CD4-positive, alpha-beta memory T cell (primary cell): ENCODE measurements at regions of chr11 and their contacts with region 1.

Region 1: GRCh38 chr11:5600374-5600851 is 4.0 kb downstream of the TRIM6 start:
- DNase-seq: peak; percentile 36 to 57 (median 54)
- H3K4me3 ChIP-seq: no peak overlapping the region
- H3K4me3 Mint-ChIP-seq: no peak overlapping the region
- H3K27ac ChIP-seq: no peak overlapping the region
- H3K27ac Mint-ChIP-seq: peak overlapping the region in 1 of 7 donors; percentile 37
- H3K4me1 ChIP-seq: peaks cover 6% of the 10 kb centered on the region
- H3K4me1 Mint-ChIP-seq: peaks cover 3 to 10% (median 5%) of the 10 kb centered on the region in 4 donors
- H3K27me3 ChIP-seq: no peaks in the 10 kb centered on the region
- H3K27me3 Mint-ChIP-seq: peaks cover 6 to 10% of the 10 kb centered on the region in 2 donors

Region 2: GRCh38 chr11:5611627-5612026 is 11.2 kb after region 1 on chr11:
- CTCF ChIA-PET with region 1: interaction called, 16 read pairs
- POLR2A ChIA-PET with region 1: no interaction called
- intact Hi-C with region 1: no loop called
- DNase-seq: no peak
- H3K4me3 ChIP-seq: no peak overlapping the region
- H3K4me3 Mint-ChIP-seq: no peak overlapping the region
- H3K27ac ChIP-seq: no peak overlapping the region
- H3K27ac Mint-ChIP-seq: no peak overlapping the region
- H3K4me1 ChIP-seq: peaks cover 5% of the 10 kb centered on the region
- H3K4me1 Mint-ChIP-seq: peaks cover 0 to 7% (median 3%) of the 10 kb centered on the region in 4 donors
- H3K27me3 ChIP-seq: no peaks in the 10 kb centered on the region
- H3K27me3 Mint-ChIP-seq: no peaks in the 10 kb centered on the region

Region 3: GRCh38 chr11:5712507-5712906 is 112.1 kb after region 1 on chr11:
- CTCF ChIA-PET with region 1: interaction called, 7 read pairs
- POLR2A ChIA-PET with region 1: no interaction called
- intact Hi-C with region 1: loop called (anchors 1 kb)
- DNase-seq: peak in 1 of 5 donors; percentile 5
- H3K4me3 ChIP-seq: no peak overlapping the region
- H3K4me3 Mint-ChIP-seq: no peak overlapping the region
- H3K27ac ChIP-seq: no peak overlapping the region
- H3K27ac Mint-ChIP-seq: peak overlapping the region in 4 of 7 donors; percentile 18 to 44 (median 26)
- H3K4me1 ChIP-seq: no peaks in the 10 kb centered on the region
- H3K4me1 Mint-ChIP-seq: peaks cover 0 to 5% (median 5%) of the 10 kb centered on the region in 4 donors
- H3K27me3 ChIP-seq: no peaks in the 10 kb centered on the region
- H3K27me3 Mint-ChIP-seq: no peaks in the 10 kb centered on the region

Region 4: GRCh38 chr11:5808500-5809121 is 208.2 kb after region 1 on chr11 and contains the start of gene OR52N2:
- CTCF ChIA-PET with region 1: interaction called, 17 read pairs
- POLR2A ChIA-PET with region 1: no interaction called
- intact Hi-C with region 1: loop called (anchors 1 kb)
- DNase-seq: peak; percentile 60 to 72 (median 66)
- H3K4me3 ChIP-seq: peak within 1 kb of the TSS; percentile 58 to 83
- H3K4me3 Mint-ChIP-seq: peak within 1 kb of the TSS; percentile 88 to 96 (median 90)
- H3K27ac ChIP-seq: no peak within 1 kb of the TSS
- H3K27ac Mint-ChIP-seq: peak within 1 kb of the TSS in 5 of 7 donors; percentile 6 to 48 (median 40)
- H3K4me1 ChIP-seq: peaks cover 8% of the 10 kb centered on the region
- H3K4me1 Mint-ChIP-seq: peaks cover 7 to 13% (median 12%) of the 10 kb centered on the region in 4 donors
- H3K27me3 ChIP-seq: no peaks in the 10 kb centered on the region
- H3K27me3 Mint-ChIP-seq: peaks cover 13 to 16% of the 10 kb centered on the region in 2 donors
- total RNA-seq, gene OR52N2: not detected

Region 5: GRCh38 chr11:5891216-5891800 is 290.9 kb after region 1 on chr11:
- CTCF ChIA-PET with region 1: interaction called, 4 read pairs
- POLR2A ChIA-PET with region 1: no interaction called
- intact Hi-C with region 1: loop called (anchors 10 kb)
- DNase-seq: peak in 3 of 5 donors; percentile 1 to 4 (median 2)
- H3K4me3 ChIP-seq: no peak overlapping the region
- H3K4me3 Mint-ChIP-seq: no peak overlapping the region
- H3K27ac ChIP-seq: no peak overlapping the region
- H3K27ac Mint-ChIP-seq: no peak overlapping the region
- H3K4me1 ChIP-seq: no peaks in the 10 kb centered on the region
- H3K4me1 Mint-ChIP-seq: no peaks in the 10 kb centered on the region
- H3K27me3 ChIP-seq: no peaks in the 10 kb centered on the region
- H3K27me3 Mint-ChIP-seq: peaks cover 0 to 10% of the 10 kb centered on the region in 2 donors